Common myeloid progenitor, CD34-positive (primary cell): ENCODE measurements at regions of chr14 and their contacts with region 1.

Region 1: DNA sequence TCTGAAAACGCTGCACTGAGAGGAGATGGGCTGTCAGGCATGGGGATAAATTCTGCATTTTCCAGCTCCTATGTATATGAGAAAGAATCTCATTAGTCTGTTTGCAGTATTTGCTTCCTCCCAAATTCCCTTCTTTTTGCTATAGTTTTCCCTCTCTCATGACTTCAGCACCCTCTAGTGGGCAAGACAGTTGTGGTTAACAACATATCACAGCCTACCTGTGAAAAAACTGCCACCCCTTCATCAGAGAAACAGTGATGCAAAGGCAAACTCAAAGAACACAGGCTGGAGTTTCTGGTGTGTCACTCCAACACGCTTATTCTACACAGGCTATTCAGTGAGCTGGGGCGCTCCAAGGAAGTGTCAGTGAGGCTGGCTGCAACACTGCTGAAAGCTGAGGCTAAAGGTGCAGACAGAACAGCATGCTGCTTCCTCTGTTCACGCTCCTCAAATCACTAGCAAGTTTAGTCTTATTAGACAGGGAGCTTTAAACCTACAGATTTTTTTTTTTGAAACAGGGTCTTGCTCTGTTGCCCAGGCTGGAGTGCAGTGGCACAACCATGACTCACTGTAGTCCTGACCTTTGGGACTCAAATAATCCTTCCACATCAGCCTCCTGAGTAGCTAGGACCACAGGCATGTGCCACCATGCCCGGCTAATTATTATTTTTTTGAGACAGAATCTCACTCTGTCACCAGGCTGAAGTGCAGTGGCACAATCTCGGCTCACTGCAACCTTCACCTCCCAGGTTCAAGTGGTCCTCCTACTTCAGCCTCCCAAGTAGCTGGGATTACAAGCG is 19.3 kb downstream of the ZC2HC1C start:
- DNase-seq: peak; percentile 50 to 71 (median 64)
- H3K4me3 ChIP-seq: no peak overlapping the region
- H3K27ac ChIP-seq: no peak overlapping the region
- H3K4me1 ChIP-seq: no peaks in the 10 kb centered on the region
- H3K27me3 ChIP-seq: no peaks in the 10 kb centered on the region

Region 2: GRCh38 chr14:74867673-74868072 is 221.1 kb before region 1 on chr14:
- CTCF ChIA-PET with region 1: interaction called, 76 read pairs
- POLR2A ChIA-PET with region 1: no interaction called
- DNase-seq: peak; percentile 48 to 90 (median 87)
- H3K4me3 ChIP-seq: peak overlapping the region in 1 of 7 experiments; percentile 6
- H3K27ac ChIP-seq: peak overlapping the region in 1 of 2 experiments; percentile 17
- H3K4me1 ChIP-seq: peaks cover 19 to 32% (median 27%) of the 10 kb centered on the region in 4 experiments
- H3K27me3 ChIP-seq: no peaks in the 10 kb centered on the region

Region 3: DNA sequence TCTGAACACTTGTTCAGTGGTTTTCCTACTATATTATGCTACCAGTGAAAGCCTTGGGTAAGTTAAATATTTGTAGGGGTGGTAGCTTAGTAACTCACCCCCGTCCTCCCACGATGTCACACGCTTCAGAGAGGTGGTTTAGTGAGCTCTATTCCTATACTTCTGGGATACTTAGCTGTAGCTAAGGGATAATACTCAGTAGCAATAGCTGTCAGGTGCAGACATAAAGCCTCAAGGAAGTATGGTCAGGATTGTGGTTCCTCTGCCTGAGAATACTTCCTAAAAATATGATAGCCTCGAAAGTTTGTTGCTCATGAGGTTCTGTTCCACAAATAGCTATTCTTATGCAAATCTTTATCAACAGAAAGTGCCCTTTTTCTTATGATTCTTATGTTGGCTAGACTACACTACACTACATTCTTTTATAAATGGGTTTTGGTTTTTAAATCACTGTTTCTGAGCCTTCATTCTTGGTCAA is 195.1 kb before region 1 on chr14:
- CTCF ChIA-PET with region 1: interaction called, 10 read pairs
- POLR2A ChIA-PET with region 1: no interaction called
- DNase-seq: peak in 2 of 3 donors; percentile 62 to 64
- H3K4me3 ChIP-seq: no peak overlapping the region
- H3K27ac ChIP-seq: peak overlapping the region in 1 of 2 experiments; percentile 16
- H3K4me1 ChIP-seq: peaks cover 0 to 29% (median 26%) of the 10 kb centered on the region in 4 experiments
- H3K27me3 ChIP-seq: no peaks in the 10 kb centered on the region

Region 4: DNA sequence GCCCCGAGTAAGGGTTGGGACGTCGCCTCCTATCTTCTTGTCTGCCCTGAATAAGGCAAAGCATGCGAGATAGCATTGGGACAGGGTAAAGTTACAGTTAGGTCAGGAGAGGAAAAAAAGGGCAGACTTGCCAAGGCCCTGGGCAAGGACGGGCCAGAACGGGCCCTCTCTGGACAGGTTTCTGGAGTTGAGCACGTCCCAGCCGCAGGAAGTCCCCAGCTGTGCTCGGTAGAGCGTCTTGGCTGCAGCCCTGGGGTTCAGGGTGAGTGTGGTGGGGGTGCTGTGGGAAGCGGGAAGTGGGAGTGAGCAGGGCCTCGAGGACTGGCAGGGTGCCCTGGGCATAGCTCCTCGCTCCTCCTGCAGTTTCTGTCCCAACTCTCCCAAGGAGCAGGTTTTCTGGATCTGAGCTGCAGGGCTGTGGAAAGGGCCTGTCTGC is 171.1 kb before region 1 on chr14:
- CTCF ChIA-PET with region 1: interaction called, 86 read pairs
- POLR2A ChIA-PET with region 1: no interaction called
- DNase-seq: no peak
- H3K4me3 ChIP-seq: no peak overlapping the region
- H3K27ac ChIP-seq: no peak overlapping the region
- H3K4me1 ChIP-seq: peaks cover 0 to 5% (median 0%) of the 10 kb centered on the region in 4 experiments
- H3K27me3 ChIP-seq: no peaks in the 10 kb centered on the region

Region 5: GRCh38 chr14:74945823-74946682 is 142.7 kb before region 1 on chr14:
- CTCF ChIA-PET with region 1: interaction called, 38 read pairs
- POLR2A ChIA-PET with region 1: no interaction called
- DNase-seq: peak; percentile 60 to 71 (median 63)
- H3K4me3 ChIP-seq: no peak overlapping the region
- H3K27ac ChIP-seq: no peak overlapping the region
- H3K4me1 ChIP-seq: peaks cover 2 to 51% (median 27%) of the 10 kb centered on the region in 4 experiments
- H3K27me3 ChIP-seq: no peaks in the 10 kb centered on the region

Region 6: DNA sequence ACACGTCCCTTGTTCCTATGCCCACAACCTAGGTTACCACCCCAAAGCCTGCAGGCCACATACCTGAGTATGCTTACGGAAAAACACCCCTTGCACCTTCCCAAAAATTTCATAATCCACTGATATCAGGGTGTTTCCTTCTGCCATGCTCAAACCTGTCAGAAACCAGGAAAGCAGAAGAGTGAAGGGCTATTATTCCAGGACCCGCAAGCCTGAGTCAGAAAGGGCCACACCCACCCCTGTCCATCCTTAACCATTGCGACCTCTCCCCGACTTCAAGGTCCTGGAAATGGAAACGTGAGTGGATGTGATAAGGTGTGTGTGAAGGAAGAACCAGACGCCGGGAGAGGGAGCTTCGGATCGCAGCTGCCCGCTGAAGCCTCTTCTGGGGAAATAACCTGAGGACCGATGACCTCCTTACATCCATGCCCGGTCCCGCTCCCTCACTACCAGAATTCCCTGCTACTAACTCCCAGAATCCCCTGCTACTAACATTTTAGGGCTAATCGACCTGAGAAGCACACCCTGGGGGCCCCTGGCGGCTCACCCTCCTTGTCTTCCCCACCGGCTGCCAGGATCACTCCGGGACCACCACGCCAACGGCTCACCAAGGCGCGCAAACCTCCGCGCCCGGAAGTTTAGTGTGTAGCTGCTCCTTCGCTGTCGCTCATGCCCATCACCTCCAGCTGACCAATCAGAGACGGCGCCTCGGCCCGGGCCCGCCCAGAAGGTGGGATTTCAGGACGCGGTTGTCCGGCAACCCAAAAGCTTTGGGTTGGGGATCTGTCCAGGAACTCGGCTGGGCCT is 25.2 kb before region 1 on chr14 and contains the start of gene ACYP1:
- CTCF ChIA-PET with region 1: interaction called, 10 read pairs
- POLR2A ChIA-PET with region 1: interaction called, 5 read pairs
- DNase-seq: peak; percentile 85 to 89 (median 88)
- H3K4me3 ChIP-seq: peak within 1 kb of the TSS; percentile 81 to 100 (median 93)
- H3K27ac ChIP-seq: peak within 1 kb of the TSS; percentile 69 to 76
- H3K4me1 ChIP-seq: peaks cover 9 to 20% (median 15%) of the 10 kb centered on the region in 4 experiments
- H3K27me3 ChIP-seq: no peaks in the 10 kb centered on the region

Region 7: DNA sequence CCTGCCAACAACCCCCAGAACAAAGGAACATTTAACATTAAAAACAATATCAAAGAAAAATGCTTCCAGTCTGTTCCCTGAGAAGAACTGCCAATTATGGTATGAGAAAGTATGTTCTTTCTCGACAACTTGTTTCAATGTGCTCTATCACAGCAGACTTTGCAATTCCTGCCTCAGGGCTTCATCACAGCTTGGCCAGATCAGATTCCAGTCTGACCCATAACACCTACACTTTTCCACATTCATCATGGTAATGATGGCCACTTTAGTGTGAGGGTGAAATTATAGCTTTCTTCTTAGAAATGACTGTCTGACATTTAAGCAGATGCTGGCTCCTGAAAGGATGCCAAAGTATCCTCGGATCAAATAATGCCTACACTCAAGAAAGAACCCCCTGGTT is 21.1 kb after region 1 on chr14:
- CTCF ChIA-PET with region 1: interaction called, 15 read pairs
- POLR2A ChIA-PET with region 1: no interaction called
- DNase-seq: no peak
- H3K4me3 ChIP-seq: no peak overlapping the region
- H3K27ac ChIP-seq: no peak overlapping the region
- H3K4me1 ChIP-seq: peaks cover 0 to 3% (median 0%) of the 10 kb centered on the region in 4 experiments
- H3K27me3 ChIP-seq: no peaks in the 10 kb centered on the region

Region 8: DNA sequence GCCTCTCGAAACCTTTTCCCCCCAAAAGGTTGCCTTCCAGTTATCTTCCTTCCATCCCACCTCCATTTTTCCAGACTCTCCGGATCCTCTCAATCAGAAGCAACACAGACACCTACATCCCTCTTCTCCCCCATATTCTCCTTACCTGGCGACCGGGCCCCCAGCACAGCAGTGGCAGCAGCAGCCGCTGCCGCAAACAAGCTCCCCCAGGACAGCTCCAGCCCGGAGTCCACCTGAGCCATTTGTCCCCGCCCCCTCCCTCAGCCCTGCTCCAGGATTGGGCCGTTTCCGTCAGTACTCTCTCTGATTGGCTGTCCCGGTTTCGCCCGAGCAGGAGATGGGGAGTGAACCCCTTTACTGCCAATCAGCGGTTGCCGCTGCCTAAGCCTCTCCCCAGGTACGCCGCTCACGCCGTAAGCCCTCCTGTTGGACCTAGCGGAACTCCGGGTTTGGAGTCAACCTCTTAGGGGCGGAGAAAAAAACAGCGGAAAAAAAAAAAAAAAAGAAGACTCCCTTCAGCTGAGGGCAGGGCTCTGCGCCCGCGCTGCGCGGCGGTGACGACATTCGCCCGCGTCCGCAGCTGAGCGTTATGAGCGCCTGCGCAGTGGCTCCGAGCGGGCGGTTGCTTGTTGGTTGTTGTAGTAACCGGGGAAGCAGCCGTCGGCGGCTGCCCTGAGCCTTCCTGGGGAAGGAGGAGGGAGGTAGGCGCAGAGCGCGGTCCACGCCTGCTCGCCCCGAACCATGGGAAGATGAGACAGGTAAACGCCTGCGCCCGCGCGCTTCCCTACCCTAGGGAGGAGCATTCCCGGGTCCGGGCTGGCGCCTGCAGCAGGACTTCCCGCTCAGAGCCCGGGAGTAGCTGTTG is 572.1 kb after region 1 on chr14 and contains the starts of genes ERG28 and TTLL5:
- CTCF ChIA-PET with region 1: no interaction called
- POLR2A ChIA-PET with region 1: no interaction called
- DNase-seq: peak; percentile 98 to 99 (median 99)
- H3K4me3 ChIP-seq: peak within 1 kb of the TSS; percentile 94 to 100 (median 98)
- H3K27ac ChIP-seq: peak within 1 kb of the TSS; percentile 88 to 95
- H3K4me1 ChIP-seq: peaks cover 10 to 20% (median 15%) of the 10 kb centered on the region in 4 experiments
- H3K27me3 ChIP-seq: no peaks in the 10 kb centered on the region